ENCODE measurements at regions of chr12 and their contacts with region 1.

Region 1: GRCh38 chr12:64759035-64759901 is at the start of gene GNS:
- DNase-seq: peak; percentile 97
- ATAC-seq: peak; percentile 88
- H3K4me3 Mint-ChIP-seq: peak within 1 kb of the TSS; percentile 88
- H3K27ac Mint-ChIP-seq: peak within 1 kb of the TSS; percentile 96
- H3K4me1 Mint-ChIP-seq: peaks cover 46% of the 10 kb centered on the region
- H3K27me3 Mint-ChIP-seq: no peaks in the 10 kb centered on the region
- total RNA-seq, gene GNS: 19.9 to 21.9 TPM

Region 2: DNA sequence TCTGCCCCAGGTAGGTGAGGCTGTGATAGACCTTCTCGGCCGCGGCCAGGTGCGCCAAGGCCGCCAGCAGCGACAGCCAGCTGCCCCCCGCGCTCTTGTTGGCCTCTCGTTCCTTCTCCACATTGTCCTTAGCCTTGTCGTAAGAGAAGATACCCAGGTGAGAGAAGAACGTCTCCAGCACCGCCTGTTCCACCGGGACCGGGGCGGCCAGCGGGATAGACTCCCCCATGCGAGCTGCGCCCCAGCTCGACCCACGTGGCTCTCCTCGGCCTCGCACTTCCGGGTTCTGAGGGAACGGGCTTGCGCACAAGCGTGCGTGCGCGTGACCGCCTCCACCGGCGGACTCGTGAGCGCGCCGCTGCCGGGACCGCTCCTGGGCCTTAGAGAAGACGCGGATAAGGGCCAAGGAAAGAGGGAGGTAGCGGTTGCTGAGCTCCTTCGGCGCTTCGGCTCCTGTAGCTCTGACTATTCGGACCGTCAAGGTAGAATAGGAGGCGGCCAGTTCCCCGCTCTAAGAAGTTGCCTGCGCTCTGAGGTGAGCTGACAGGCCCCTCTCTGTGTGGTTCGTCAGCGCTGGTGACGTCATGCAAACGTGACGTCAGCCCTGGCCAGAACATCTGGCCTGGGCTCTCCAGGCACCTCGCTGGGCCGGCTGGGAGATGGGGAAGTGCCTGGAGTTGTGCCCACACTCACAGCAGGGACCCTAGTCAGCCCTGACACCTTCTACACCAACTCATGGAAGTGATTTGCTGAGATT is 537.1 kb before region 1 on chr12 and contains the start of gene KICS2:
- CTCF ChIA-PET with region 1: no interaction called
- POLR2A ChIA-PET with region 1: no interaction called
- intact Hi-C with region 1: loop called in 1 of 2 experiments (anchors 1 kb)
- DNase-seq: peak; percentile 95
- ATAC-seq: peak; percentile 92
- H3K4me3 Mint-ChIP-seq: peak within 1 kb of the TSS; percentile 92
- H3K27ac Mint-ChIP-seq: peak within 1 kb of the TSS; percentile 96
- H3K4me1 Mint-ChIP-seq: peaks cover 30% of the 10 kb centered on the region
- H3K27me3 Mint-ChIP-seq: peaks cover 4% of the 10 kb centered on the region
- total RNA-seq, gene KICS2: 15.1 to 16.6 TPM

Region 3: DNA sequence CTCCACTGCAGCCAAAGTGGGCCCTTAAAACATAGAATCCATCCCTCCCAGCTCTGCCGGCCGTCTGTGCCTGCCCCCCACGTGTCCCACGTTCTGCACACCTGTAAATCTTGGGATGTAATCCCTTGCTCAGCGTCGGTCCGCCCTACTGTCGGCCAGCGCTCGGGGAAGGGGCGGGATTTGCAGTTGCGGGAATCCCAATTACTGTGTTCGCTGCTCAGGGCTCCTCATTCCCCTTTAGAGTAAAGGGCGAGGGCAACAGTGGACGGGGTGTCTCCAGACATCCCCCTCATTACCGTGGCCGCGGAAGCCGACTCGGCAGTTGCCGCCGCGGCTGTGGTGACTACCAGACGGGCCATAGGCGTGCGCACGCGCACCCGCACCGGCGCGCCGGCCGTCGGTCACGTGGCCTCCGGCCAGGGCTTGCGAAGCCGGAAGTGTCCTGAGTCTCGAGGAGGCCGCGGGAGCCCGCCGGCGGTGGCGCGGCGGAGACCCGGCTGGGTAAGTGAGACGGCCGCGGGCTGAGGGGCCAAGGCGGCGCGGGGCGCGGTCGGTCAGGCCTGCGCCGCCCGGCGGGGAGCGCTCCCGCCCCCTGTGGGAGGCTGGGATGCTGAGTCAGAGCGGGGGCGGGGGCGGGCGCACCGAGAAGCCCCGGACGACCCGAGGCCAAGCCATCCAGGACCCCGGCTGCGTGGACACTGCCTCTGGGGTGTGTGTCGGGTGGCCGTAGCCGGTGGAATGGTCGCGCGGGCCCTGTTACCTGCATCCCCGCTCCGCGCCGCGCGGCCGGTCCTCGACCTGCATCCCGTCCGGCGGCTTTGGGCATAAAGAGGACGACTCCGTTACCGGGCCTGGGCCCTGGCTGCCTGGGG is 307.3 kb before region 1 on chr12 and contains the start of gene TBK1:
- CTCF ChIA-PET with region 1: no interaction called
- POLR2A ChIA-PET with region 1: no interaction called
- intact Hi-C with region 1: loop called in 1 of 2 experiments (anchors 1 kb)
- DNase-seq: peak; percentile 75
- ATAC-seq: peak; percentile 64
- H3K4me3 Mint-ChIP-seq: peak within 1 kb of the TSS; percentile 89
- H3K27ac Mint-ChIP-seq: peak within 1 kb of the TSS; percentile 98
- H3K4me1 Mint-ChIP-seq: peaks cover 40% of the 10 kb centered on the region
- H3K27me3 Mint-ChIP-seq: no peaks in the 10 kb centered on the region
- total RNA-seq, gene TBK1: 14.0 to 15.4 TPM

Region 4: GRCh38 chr12:64780531-64781279 is 21.4 kb after region 1 on chr12:
- CTCF ChIA-PET with region 1: interaction called, 3 read pairs
- POLR2A ChIA-PET with region 1: no interaction called
- intact Hi-C with region 1: loop called in 1 of 2 experiments (anchors 1 kb)
- DNase-seq: peak; percentile 33
- ATAC-seq: peak; percentile 57
- H3K4me3 Mint-ChIP-seq: peak overlapping the region; percentile 62
- H3K27ac Mint-ChIP-seq: no peak overlapping the region
- H3K4me1 Mint-ChIP-seq: peaks cover 16% of the 10 kb centered on the region
- H3K27me3 Mint-ChIP-seq: peaks cover 64% of the 10 kb centered on the region

Measured in activated CD4-positive, alpha-beta T cell treated with anti-CD3 and anti-CD28 coated beads for 36 hours (primary cell).